ENCODE measurements at regions of chr1 and their contacts with region 1.

Region 1: DNA sequence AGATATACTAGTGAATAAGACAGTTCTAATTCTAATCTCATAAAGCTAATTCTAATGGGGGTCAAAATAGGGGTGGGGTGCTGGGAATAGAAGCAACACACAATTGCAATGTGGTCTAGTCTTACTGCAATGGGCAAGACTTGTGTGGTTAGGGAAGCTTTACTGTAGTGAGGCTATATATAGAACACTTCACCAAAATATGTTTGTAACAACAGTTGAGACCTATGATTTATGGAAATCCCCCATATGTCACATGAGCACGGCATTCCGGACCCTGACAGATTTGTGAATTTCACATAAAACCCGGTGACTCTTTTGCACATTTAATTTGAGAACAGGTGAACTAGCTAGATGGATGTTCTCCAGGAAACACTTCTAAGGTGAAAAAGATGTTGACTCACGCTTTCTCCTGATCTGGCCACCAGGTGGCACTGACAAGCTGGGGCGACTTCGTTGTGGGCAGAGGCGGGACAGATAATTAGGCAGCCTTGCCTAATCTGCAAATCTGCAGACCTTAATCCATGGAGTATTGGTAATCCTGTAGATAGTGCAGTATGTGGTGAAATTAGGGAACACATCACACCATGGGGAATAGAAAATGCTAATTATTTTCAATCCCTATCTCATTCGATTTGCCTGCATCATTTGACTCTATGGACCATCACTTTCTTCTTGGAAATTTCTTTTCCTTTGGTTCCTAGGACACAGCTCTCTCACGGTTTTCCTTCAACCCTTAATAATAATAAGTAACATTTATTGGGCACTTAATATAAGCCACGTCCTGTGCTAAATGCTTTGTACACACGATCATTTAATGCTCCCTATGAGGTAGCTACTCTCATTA is 37.7 kb downstream of the KIAA0040 start:
- DNase-seq: peak; percentile 56
- ATAC-seq: peak; percentile 65
- H3K4me3 ChIP-seq: no peak overlapping the region
- H3K27ac ChIP-seq: no peak overlapping the region
- H3K4me1 ChIP-seq: peaks cover 0 to 15% of the 10 kb centered on the region in 2 experiments; a peak in 2 of 4 replicates
- H3K27me3 ChIP-seq: peaks cover 9% of the 10 kb centered on the region
- CTCF ChIP-seq: peak; percentile 83 to 95 (median 93)
- POLR2A ChIP-seq: no peak
- RAD21 ChIP-seq: peak; percentile 97

Region 2: GRCh38 chr1:174761335-174761734 is 393.5 kb before region 1 on chr1:
- CTCF ChIA-PET with region 1: no interaction called
- POLR2A ChIA-PET with region 1: no interaction called
- RAD21 ChIA-PET with region 1: no interaction called
- intact Hi-C with region 1: no loop called
- DNase-seq: no peak
- ATAC-seq: no peak
- H3K4me3 ChIP-seq: no peak overlapping the region
- H3K27ac ChIP-seq: no peak overlapping the region
- H3K4me1 ChIP-seq: no peaks in the 10 kb centered on the region
- H3K27me3 ChIP-seq: no peaks in the 10 kb centered on the region
- CTCF ChIP-seq: no peak
- POLR2A ChIP-seq: no peak
- RAD21 ChIP-seq: no peak

Region 3: GRCh38 chr1:175023043-175023921 is 131.6 kb before region 1 on chr1 and contains the start of gene MRPS14:
- CTCF ChIA-PET with region 1: interaction called, 4 read pairs
- POLR2A ChIA-PET with region 1: no interaction called
- RAD21 ChIA-PET with region 1: no interaction called
- intact Hi-C with region 1: loop called (anchors 2 kb)
- DNase-seq: peak; percentile 98
- ATAC-seq: peak; percentile 96
- H3K4me3 ChIP-seq: peak within 1 kb of the TSS; percentile 90 to 97
- H3K27ac ChIP-seq: peak within 1 kb of the TSS; percentile 67
- H3K4me1 ChIP-seq: peaks cover 0 to 13% of the 10 kb centered on the region in 2 experiments; a peak in 2 of 4 replicates
- H3K27me3 ChIP-seq: no peaks in the 10 kb centered on the region
- CTCF ChIP-seq: no peak
- POLR2A ChIP-seq: peak; percentile 86
- RAD21 ChIP-seq: no peak
- total RNA-seq, gene MRPS14: 29.4 TPM

Region 4: GRCh38 chr1:175221666-175222175 is 66.9 kb after region 1 on chr1:
- CTCF ChIA-PET with region 1: interaction called, 13 read pairs
- POLR2A ChIA-PET with region 1: no interaction called
- RAD21 ChIA-PET with region 1: no interaction called
- intact Hi-C with region 1: loop called (anchors 1 kb)
- DNase-seq: no peak
- ATAC-seq: peak; percentile 67
- H3K4me3 ChIP-seq: no peak overlapping the region
- H3K27ac ChIP-seq: no peak overlapping the region
- H3K4me1 ChIP-seq: peaks cover 3 to 25% of the 10 kb centered on the region in 2 experiments; a peak in 2 of 4 replicates
- H3K27me3 ChIP-seq: no peaks in the 10 kb centered on the region
- CTCF ChIP-seq: peak in 1 of 3 experiments; percentile 40; a peak in 1 of 6 replicates
- POLR2A ChIP-seq: no peak
- RAD21 ChIP-seq: peak; percentile 66

Region 5: GRCh38 chr1:175373786-175374623 is 219.2 kb after region 1 on chr1:
- CTCF ChIA-PET with region 1: interaction called, 17 read pairs
- POLR2A ChIA-PET with region 1: no interaction called
- RAD21 ChIA-PET with region 1: interaction called in 1 of 2 experiments, 8 read pairs
- intact Hi-C with region 1: no loop called
- DNase-seq: peak; percentile 13
- ATAC-seq: peak; percentile 87
- H3K4me3 ChIP-seq: no peak overlapping the region
- H3K27ac ChIP-seq: no peak overlapping the region
- H3K4me1 ChIP-seq: no peaks in the 10 kb centered on the region
- H3K27me3 ChIP-seq: peaks cover 49% of the 10 kb centered on the region; the same call in 1 of the 2 replicates
- CTCF ChIP-seq: peak; percentile 65 to 86 (median 85)
- POLR2A ChIP-seq: no peak
- RAD21 ChIP-seq: peak; percentile 81

Region 6: GRCh38 chr1:175708788-175709187 is 553.9 kb after region 1 on chr1:
- CTCF ChIA-PET with region 1: interaction called, 10 read pairs
- POLR2A ChIA-PET with region 1: no interaction called
- RAD21 ChIA-PET with region 1: interaction called in 1 of 2 experiments, 5 read pairs
- intact Hi-C with region 1: no loop called
- DNase-seq: no peak
- ATAC-seq: peak; percentile 57; the same call in 1 of the 2 replicates
- H3K4me3 ChIP-seq: no peak overlapping the region
- H3K27ac ChIP-seq: no peak overlapping the region
- H3K4me1 ChIP-seq: no peaks in the 10 kb centered on the region
- H3K27me3 ChIP-seq: peaks cover 51% of the 10 kb centered on the region
- CTCF ChIP-seq: no peak
- POLR2A ChIP-seq: no peak
- RAD21 ChIP-seq: 0 out of 2 replicates have a peak, but pooled peaks have one; percentile 6

Region 7: DNA sequence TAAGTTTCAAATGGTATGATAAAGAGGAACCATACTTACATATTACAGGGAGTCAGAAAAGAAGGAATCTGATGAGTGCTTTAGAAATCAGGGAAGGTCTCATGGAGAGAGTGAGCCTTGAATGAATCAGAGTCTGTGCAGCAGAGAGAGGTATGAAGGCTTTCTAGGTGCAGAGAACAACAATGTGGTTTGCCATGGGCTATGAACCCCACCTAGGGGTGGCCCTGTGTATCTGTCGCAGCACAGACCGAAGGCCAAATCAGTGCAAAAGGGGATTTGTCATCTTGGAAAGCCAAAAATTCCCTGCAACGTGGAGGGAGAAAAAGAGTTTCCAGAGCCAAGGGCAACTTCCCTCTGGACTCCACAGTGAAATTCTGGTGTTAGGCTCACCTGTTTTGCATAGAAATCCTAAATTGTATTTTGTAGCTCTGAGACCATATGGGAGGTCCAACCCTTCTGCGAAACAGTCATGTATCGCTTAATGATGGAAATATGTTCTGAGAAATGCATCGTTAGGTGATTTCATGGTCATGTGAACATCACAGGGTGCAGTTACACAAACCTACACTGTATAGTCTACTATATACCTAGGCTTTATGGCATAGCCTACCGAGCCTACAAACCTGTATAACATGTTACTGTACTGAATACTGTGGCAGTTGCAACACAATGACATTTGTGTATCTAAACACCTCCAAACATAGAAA is 1311.8 kb after region 1 on chr1:
- CTCF ChIA-PET with region 1: no interaction called
- POLR2A ChIA-PET with region 1: no interaction called
- RAD21 ChIA-PET with region 1: no interaction called
- intact Hi-C with region 1: loop called (anchors 5 kb)
- DNase-seq: no peak
- ATAC-seq: peak; percentile 86
- H3K4me3 ChIP-seq: no peak overlapping the region
- H3K27ac ChIP-seq: no peak overlapping the region
- H3K4me1 ChIP-seq: no peaks in the 10 kb centered on the region
- H3K27me3 ChIP-seq: peaks cover 39% of the 10 kb centered on the region
- CTCF ChIP-seq: peak; percentile 31 to 68 (median 60); a peak in 4 of 6 replicates
- POLR2A ChIP-seq: no peak
- RAD21 ChIP-seq: peak; percentile 63

Measured in HCT116 (cell line).